ENCODE measurements at regions of chr11 and their contacts with region 1.

Region 1: DNA sequence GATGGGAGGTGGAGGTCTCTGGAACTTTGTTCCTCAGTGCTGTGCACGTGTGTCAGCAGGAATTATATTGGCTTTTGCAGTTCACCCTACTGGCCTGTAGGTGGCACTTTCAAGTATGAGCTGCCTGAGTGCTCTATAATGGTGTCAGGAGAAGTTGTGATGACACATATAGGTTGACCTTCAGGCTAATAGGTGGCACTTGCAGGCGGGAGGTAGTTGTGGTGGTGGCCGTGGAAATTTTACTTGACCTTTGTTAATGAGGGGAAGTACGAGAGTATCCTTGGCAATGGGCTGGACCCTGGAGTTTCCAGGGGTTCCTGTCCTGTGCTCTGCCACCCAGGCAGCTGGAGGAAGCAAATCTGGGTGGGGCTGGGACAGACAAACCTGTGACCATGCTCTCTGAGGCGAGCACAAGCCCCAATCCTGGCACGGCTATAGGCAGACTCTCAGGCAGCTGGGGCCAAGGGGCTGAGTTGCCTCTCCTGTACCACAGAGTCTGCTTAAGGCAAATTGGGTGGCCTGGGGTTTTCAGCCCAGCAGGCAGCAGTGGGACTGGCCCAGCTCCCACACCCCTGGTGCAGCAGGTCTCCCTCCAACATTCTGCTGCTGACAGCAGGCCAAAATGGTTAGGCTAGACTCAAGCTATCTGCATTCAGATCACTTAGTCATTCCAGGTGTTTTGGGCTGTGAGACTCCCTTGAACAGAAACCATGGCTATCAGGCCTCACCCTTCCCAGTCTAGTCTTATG is 147.5 kb upstream of the CTSC start:
- DNase-seq: peak in 6 of 7 donors; percentile 26 to 64 (median 48)
- H3K4me3 ChIP-seq: no peak overlapping the region
- H3K27ac ChIP-seq: no peak overlapping the region
- H3K4me1 ChIP-seq: no peaks in the 10 kb centered on the region
- H3K27me3 ChIP-seq: no peaks in the 10 kb centered on the region
- CTCF ChIP-seq: peak; percentile 60 to 73 (median 69)
- POLR2A ChIP-seq: no peak

Region 2: DNA sequence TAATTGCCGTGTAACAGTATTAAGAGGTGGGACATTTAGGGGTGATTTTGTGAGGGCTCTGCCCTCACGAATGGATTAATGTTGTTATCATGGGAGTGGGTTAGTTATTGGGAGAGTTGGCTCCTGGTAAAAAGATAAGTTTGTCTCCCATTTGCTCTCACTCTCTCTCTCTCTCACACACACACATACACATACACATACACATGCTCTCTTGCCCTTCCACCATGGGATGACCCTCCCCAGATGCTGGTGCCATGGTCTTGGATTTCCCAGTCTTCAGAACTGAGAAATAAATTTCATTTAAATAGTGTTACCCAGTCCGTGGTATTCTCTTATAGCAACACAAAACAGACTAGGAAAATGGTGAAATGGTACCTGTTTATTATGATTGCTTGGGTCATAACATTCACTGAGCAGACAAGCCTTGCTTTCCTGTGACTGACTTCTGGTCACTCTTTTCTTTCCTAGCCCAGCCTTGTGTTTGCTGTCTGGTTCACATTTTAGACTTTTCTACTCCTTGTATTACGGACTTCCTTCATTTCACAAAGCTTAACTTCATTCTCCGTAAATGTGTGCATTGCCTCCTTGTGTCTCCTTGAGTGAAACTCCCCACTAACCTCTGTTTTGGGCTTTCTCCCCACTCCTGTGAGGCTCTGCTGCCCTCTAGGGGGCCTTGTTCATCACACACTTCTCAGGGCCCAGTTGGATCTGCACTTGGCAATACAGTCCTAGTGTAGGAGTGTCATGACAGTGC is 59.0 kb after region 1 on chr11:
- intact Hi-C with region 1: loop called in 1 of 2 experiments (anchors 10 kb)
- DNase-seq: peak; percentile 75 to 92 (median 80)
- H3K4me3 ChIP-seq: no peak overlapping the region
- H3K27ac ChIP-seq: no peak overlapping the region
- H3K4me1 ChIP-seq: no peaks in the 10 kb centered on the region
- H3K27me3 ChIP-seq: no peaks in the 10 kb centered on the region
- CTCF ChIP-seq: peak; percentile 89 to 98 (median 94)
- POLR2A ChIP-seq: no peak

Measured in adrenal gland (tissue), 19 donors.